IMR-90 (cell line): ENCODE measurements at regions of chr6 and their contacts with region 1.

Region 1: GRCh38 chr6:15148356-15148946 is 97.4 kb upstream of the JARID2 start:
- DNase-seq: peak; percentile 90
- ATAC-seq: peak; percentile 96
- H3K4me3 ChIP-seq: no peak overlapping the region
- H3K27ac ChIP-seq: peak overlapping the region; percentile 18; the same call in 1 of the 2 replicates
- H3K4me1 ChIP-seq: peaks cover 9% of the 10 kb centered on the region; the same call in 1 of the 2 replicates
- H3K27me3 ChIP-seq: no peaks in the 10 kb centered on the region
- CTCF ChIP-seq: no peak
- POLR2A ChIP-seq: no peak
- RAD21 ChIP-seq: peak; percentile 5; the same call in 1 of the 2 replicates

Region 2: DNA sequence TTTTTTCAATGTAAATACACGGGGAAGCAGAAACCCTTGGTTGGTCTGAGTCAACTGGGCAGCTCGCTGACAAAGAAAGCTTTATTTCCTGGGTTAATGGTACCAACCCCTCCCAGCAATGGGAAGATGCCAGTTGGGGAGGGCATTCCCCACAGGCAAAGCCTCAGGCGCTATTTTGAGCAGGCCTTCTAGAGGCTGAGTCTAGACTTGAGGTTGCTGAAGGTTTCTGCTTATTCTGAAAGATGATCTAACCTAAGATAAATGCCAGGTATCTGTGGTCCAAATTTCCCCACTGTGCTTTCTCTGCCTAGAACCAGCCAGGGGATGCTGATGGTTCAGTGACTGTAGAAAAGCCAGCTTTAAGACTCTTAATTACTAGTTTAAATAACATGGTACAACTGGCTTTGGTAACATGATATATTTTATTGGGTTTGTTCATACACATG is 75.1 kb before region 1 on chr6:
- CTCF ChIA-PET with region 1: no interaction called
- POLR2A ChIA-PET with region 1: interaction called, 15 read pairs
- dilution Hi-C with region 1: no loop called
- in situ Hi-C with region 1: no loop called
- intact Hi-C with region 1: no loop called
- DNase-seq: peak; percentile 18
- ATAC-seq: no peak
- H3K4me3 ChIP-seq: no peak overlapping the region
- H3K27ac ChIP-seq: no peak overlapping the region
- H3K4me1 ChIP-seq: no peaks in the 10 kb centered on the region
- H3K27me3 ChIP-seq: no peaks in the 10 kb centered on the region
- CTCF ChIP-seq: no peak
- POLR2A ChIP-seq: no peak
- RAD21 ChIP-seq: no peak